Activated B cell treated with CpG ODN at 0.5 μM for 24 hours (primary cell): ENCODE measurements at regions of chrX and their contacts with region 1.

Region 1: DNA sequence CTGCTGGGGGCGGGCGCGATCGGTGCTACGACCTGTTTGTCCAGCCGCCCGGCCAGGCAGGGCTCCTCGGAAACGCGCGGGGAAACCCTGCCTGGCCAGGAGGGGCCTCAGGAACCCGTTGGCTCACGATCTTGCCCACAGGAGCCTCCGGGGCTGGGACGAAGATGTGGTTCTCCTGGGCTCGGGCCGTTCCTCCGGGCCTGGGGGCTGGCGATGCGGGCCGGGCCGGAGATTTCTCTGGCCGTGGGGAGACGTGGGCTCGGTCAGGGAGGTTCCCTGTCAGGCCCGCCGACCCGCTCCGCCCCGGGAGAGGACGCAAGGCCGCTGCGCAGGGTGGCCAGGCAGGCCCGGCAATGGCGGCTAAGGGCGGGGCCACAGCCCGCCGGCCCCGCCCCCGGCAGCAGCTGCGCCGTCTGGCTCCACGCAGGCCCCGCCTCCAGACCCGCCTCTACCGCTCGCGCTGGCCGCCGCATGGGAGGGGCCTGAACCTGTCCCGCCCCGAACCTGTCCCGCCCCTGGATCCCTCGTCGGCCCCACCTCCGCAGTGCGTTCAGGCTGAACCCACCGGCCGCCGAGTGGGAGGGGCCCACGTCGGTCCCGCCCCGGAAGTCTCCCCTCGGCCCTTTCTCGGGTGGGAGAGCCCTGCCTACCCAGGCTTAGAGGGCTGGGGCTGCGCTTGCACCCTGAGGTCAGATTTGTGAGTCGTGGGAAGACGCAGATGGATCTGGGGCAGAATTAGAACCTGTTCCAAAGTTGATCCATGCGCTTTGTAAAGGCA is at the start of gene FAM3A:
- DNase-seq: peak; percentile 87
- ATAC-seq: peak; percentile 97
- H3K4me3 Mint-ChIP-seq: peak within 1 kb of the TSS; percentile 85
- H3K27ac Mint-ChIP-seq: peak within 1 kb of the TSS; percentile 85
- H3K4me1 Mint-ChIP-seq: peaks cover 18% of the 10 kb centered on the region
- H3K27me3 Mint-ChIP-seq: no peaks in the 10 kb centered on the region
- CTCF ChIP-seq: no peak
- total RNA-seq, gene FAM3A: 30.0 and 36.1 TPM in 2 replicates

Region 2: GRCh38 chrX:154097597-154098541 is 418.2 kb before region 1 on chrX and contains the start of gene MECP2:
- CTCF ChIA-PET with region 1: no interaction called
- POLR2A ChIA-PET with region 1: no interaction called
- intact Hi-C with region 1: loop called (anchors 5 kb)
- DNase-seq: peak; percentile 75
- ATAC-seq: peak; percentile 93
- H3K4me3 Mint-ChIP-seq: peak within 1 kb of the TSS; percentile 90
- H3K27ac Mint-ChIP-seq: peak within 1 kb of the TSS; percentile 85
- H3K4me1 Mint-ChIP-seq: peaks cover 39% of the 10 kb centered on the region
- H3K27me3 Mint-ChIP-seq: peaks cover 2% of the 10 kb centered on the region
- CTCF ChIP-seq: no peak
- total RNA-seq, gene MECP2: 56.8 and 69.0 TPM in 2 replicates

Region 3: DNA sequence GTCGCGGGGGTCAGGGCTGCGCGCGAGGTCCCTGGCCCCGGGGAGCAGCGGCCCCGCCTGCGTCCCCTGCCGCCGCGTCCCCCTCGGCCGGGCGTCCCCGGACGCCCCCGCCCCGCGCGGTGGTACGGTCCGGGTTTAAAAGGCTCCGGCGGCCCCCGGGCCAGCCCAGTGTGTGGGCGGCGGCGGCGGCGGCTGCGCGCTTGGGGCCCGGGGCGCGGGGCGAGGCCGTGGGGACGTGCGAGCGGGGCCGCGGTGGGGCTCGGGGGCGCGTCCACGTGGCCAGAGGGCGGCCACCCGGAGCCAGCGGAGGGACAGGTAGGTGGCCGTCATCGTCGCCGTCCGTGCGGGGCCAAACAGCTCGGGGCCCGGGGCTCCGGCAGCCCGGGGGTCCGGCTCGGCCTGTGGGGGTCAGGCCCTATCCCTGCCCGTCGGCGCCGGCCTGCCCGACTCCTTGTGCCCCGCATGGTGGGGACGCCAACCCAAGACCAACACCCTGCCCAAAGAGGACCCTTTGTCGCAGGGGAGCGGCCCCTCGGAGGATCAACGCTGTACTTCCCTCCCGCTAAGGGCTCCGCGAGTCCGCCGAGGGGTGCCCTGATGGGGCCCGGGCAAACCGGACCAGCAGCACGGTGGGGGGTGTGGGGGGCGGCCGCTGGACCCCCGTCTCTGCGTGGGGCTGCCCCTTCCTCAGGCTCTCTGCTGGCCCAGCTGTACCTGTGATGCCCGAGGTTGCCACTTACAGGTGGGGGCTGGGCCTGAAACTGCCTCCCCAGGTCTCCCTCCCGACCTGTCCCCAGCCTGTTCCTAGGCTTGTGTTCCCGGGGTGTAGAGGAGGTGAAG is 57.7 kb before region 1 on chrX and contains the start of gene PLXNA3:
- CTCF ChIA-PET with region 1: no interaction called
- POLR2A ChIA-PET with region 1: interaction called, 5 read pairs
- intact Hi-C with region 1: loop called (anchors 10 kb)
- DNase-seq: peak; percentile 75
- ATAC-seq: peak; percentile 84
- H3K4me3 Mint-ChIP-seq: peak within 1 kb of the TSS; percentile 93
- H3K27ac Mint-ChIP-seq: peak within 1 kb of the TSS; percentile 94
- H3K4me1 Mint-ChIP-seq: peaks cover 14% of the 10 kb centered on the region
- H3K27me3 Mint-ChIP-seq: no peaks in the 10 kb centered on the region
- CTCF ChIP-seq: no peak
- total RNA-seq, gene PLXNA3: 58.9 and 69.5 TPM in 2 replicates

Region 4: DNA sequence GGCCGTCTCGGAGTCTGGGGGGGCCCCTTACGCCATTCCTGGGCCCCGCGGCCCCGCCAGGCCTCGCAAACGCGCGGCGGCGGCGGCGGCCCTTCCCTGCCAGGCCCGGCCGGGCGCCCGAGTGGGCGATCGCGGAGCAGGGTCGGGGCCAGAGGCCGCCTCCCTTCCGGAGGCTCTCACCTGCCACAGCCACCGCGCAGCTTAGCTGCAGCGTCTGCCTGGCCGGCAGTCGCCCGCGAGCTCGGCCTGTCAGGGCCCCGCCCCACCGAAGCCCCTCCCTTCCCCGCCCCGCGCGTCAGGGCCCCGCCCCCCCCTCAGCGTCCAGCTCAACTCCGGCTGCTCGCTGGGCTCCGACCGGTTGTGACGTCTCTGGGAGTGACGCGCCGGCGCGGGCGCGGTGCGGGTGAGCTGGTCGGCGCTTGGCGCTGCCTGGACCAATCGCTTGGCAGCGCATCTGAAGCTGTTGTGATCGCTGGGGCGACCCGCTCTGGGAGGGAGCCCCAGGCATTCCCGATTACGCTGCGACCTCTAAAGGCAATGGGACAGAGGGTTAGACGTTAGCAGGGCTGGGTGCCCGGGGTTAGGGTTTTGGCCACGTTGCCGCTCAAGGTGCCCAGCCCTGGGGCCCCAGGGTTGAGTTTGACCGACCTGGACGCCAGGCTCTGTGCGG is 25.5 kb before region 1 on chrX and contains the start of gene SLC10A3:
- CTCF ChIA-PET with region 1: interaction called, 3 read pairs
- POLR2A ChIA-PET with region 1: interaction called, 34 read pairs
- intact Hi-C with region 1: loop called (anchors 1 kb)
- DNase-seq: peak; percentile 77
- ATAC-seq: peak; percentile 82
- H3K4me3 Mint-ChIP-seq: peak within 1 kb of the TSS; percentile 88
- H3K27ac Mint-ChIP-seq: peak within 1 kb of the TSS; percentile 93
- H3K4me1 Mint-ChIP-seq: peaks cover 10% of the 10 kb centered on the region
- H3K27me3 Mint-ChIP-seq: no peaks in the 10 kb centered on the region
- CTCF ChIP-seq: no peak
- total RNA-seq, gene SLC10A3: 13.4 and 17.1 TPM in 2 replicates

Region 5: DNA sequence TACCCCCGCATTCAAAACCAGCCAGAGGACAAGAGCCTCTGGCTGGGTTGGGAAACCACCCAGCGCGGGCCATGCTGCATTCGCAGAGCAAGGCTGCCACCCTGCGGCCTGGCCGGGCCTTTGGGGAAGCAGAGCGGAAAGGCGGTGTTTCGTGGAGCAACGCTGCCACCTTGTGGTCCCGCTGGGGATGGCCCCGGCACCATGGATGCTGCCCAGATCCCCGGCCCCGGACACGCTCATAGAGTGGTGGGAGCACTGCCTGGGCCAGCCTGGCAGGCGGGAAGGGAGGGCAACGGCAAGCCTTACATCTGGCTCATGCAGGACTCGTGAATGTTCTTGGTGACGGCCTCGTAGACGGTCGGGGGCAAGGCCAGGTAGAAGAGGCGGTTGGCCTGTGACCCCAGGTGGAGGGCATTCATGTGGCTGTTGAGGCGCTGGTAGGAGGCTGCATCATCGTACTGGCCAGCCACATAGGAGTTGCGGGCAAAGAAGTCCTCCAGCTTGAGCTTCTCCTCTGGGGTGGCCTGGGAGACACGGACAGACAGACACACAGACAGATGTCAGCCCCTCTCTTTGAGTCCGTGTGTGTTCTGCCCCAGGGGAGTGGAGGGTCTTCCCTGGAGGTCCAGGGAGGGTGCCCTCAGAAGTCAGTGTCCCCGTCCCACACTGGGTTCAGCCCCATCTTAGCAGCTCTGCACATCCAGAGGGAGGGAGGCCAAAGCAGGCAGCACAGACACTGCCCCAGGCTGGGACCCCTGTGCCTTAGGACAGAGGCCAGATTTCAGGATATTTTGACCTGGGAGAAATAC is 19.0 kb after region 1 on chrX:
- CTCF ChIA-PET with region 1: no interaction called
- POLR2A ChIA-PET with region 1: no interaction called
- intact Hi-C with region 1: no loop called
- DNase-seq: peak; percentile 77
- ATAC-seq: peak; percentile 96
- H3K4me3 Mint-ChIP-seq: no peak overlapping the region
- H3K27ac Mint-ChIP-seq: peak overlapping the region; percentile 50
- H3K4me1 Mint-ChIP-seq: peaks cover 3% of the 10 kb centered on the region
- H3K27me3 Mint-ChIP-seq: no peaks in the 10 kb centered on the region
- CTCF ChIP-seq: peak; percentile 30

Region 6: GRCh38 chrX:154547245-154548027 is 31.4 kb after region 1 on chrX and contains the start of gene IKBKG:
- CTCF ChIA-PET with region 1: no interaction called
- POLR2A ChIA-PET with region 1: interaction called, 3 read pairs
- intact Hi-C with region 1: loop called (anchors 1 kb)
- DNase-seq: peak; percentile 86
- ATAC-seq: peak; percentile 81
- H3K4me3 Mint-ChIP-seq: peak within 1 kb of the TSS; percentile 86
- H3K27ac Mint-ChIP-seq: peak within 1 kb of the TSS; percentile 95
- H3K4me1 Mint-ChIP-seq: peaks cover 45% of the 10 kb centered on the region
- H3K27me3 Mint-ChIP-seq: no peaks in the 10 kb centered on the region
- CTCF ChIP-seq: no peak
- total RNA-seq, gene IKBKG: 52.9 and 61.1 TPM in 2 replicates